Head of caudate nucleus (tissue), 42 donors: ENCODE measurements at regions of chr17 and their contacts with region 1.

Region 1: GRCh38 chr17:21511363-21512198 is 135.4 kb downstream of the KCNJ12 start:
- DNase-seq: peak; percentile 62 to 93 (median 84)

Region 2: GRCh38 chr17:21284319-21285163 is 227.0 kb before region 1 on chr17 and contains the start of gene MAP2K3:
- intact Hi-C with region 1: loop called (anchors 5 kb)
- DNase-seq: peak; percentile 96 to 100 (median 100)

Region 3: DNA sequence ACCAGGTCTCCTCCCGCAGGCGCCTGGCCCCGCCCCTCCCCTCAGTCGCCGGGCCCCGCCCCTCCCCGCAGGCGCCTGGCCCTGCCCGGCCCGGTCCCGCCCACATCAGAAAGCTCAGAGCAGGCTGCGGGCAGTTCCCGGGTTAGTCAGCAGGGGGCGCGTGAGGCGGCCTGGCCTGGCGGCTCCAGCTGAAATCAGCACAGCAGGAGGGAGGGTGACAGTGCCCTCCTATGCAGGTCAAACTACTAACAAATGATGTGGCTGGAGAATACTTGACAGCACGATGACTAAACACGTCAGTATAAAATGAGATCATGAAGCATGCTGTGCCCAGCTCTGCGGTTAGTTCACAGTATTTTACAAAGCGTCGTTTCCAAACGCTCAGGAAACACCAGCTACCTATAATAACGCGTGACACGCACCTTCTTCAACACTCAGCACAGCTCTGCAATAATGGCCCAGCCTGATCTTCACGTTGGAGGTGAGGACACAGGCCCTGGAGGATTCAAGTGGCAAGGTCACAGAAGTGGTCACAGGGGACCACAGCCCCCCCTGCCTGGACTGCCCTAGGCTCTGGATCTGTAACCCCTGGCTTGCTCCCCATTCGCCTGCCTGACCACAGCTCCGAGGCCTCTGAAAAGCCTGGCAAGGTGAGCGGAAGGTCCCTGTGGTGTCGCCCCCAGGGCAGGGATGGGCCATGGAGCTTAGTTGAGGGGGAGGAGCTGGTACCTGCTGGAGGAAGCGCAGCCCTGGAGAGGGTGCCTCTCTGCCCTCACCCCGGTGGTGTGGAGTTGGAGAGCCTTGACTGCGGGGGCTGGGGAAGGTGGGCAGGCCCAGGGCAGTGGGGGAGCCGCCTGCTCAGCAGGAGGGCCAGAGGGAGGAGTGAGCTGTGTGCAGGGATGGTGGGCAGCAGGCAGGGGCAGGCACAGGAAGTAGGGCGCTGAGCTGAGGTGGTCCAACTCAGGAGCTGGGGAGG is 54.2 kb before region 1 on chr17:
- intact Hi-C with region 1: loop called (anchors 2 kb)
- DNase-seq: peak; percentile 64 to 93 (median 85)

Region 4: GRCh38 chr17:21475571-21475970 is 36.0 kb before region 1 on chr17:
- intact Hi-C with region 1: no loop called
- DNase-seq: peak in 2 of 42 donors; percentile 2 to 28